Dendritic cell treated with granulocyte-macrophage colony-stimulating factor and Interleukin-4, amounts not matched to agents 40 ng/mL and 50 ng/mL, for 4 days (primary cell): ENCODE measurements at regions of chr3 and their contacts with region 1.

Region 1: GRCh38 chr3:118882353-118882947 is 152.2 kb downstream of the IGSF11 start:
- H3K4me3 Mint-ChIP-seq: no peak overlapping the region
- H3K27ac Mint-ChIP-seq: no peak overlapping the region
- H3K4me1 Mint-ChIP-seq: no peaks in the 10 kb centered on the region
- H3K27me3 Mint-ChIP-seq: peaks cover 5% of the 10 kb centered on the region

Region 2: DNA sequence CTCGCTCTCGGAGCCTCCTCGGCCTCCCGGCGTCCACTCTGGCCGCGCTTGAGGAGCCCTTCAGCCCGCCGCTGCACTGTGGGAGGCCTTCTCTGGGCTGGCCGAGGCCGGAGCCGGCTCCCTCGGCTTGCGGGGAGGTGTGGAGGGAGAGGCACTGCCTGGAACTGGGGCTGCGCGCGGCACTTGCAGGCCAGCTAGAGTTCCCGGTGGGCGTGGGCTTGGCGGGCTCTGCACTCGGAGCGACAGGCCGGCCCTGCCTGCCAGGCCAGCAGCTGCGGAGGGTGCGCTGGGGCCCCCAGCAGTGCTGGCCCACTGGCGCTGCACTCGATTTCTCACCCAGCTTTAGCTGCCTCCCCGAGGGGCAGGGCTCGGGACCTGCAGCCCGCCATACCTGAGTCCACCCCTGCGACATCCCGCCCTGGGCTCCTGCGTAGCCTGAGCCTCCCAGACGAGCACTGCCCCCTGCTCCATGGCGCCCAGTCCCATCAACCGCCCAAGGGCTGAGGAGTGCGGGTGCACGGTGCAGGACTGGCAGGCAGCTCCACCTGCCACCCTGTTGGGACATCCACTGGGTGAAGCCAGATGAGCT is 612.8 kb before region 1 on chr3:
- intact Hi-C with region 1: no loop called
- H3K4me3 Mint-ChIP-seq: no peak overlapping the region
- H3K27ac Mint-ChIP-seq: no peak overlapping the region
- H3K4me1 Mint-ChIP-seq: no peaks in the 10 kb centered on the region
- H3K27me3 Mint-ChIP-seq: no peaks in the 10 kb centered on the region

Region 3: DNA sequence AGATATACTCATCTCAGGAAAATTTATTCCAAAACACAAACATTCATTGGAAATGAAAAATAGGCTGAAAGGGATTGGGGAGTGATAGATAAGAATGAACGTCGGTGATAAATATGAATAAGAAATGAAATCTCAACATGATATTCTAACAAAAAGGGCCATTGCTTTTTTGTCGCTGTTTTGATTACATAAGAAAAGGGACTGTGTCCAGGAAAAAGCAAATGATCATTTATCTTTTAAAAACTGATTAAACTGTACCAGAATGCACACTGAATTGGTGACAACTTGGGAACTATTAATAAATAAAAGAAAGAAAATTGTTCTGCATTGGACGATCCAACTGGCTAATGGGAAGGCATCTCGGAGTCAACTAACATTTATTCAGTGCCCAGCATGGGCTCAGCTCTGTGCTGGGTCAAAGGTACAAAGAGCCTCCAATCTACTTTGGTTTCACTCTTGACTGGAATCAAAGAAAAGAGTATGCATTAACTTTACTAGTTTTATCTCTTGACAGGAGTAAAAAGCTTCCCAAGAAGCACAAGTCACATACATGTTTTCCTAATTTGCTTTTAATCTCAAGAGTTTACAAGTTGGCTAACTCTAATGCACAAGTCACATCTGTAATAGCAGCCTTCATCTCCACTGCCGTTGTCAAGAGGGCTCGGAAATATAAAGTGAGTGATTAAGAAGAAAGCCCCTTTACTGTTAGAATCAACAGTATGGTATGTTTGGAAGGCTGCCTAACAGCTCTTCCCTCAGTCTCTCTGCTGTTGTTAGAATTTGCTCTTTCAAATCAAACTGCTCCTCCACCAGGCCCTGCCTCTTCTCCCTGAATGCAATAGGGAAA is 127.8 kb before region 1 on chr3:
- intact Hi-C with region 1: no loop called
- H3K4me3 Mint-ChIP-seq: no peak overlapping the region
- H3K27ac Mint-ChIP-seq: no peak overlapping the region
- H3K4me1 Mint-ChIP-seq: no peaks in the 10 kb centered on the region
- H3K27me3 Mint-ChIP-seq: no peaks in the 10 kb centered on the region

Region 4: DNA sequence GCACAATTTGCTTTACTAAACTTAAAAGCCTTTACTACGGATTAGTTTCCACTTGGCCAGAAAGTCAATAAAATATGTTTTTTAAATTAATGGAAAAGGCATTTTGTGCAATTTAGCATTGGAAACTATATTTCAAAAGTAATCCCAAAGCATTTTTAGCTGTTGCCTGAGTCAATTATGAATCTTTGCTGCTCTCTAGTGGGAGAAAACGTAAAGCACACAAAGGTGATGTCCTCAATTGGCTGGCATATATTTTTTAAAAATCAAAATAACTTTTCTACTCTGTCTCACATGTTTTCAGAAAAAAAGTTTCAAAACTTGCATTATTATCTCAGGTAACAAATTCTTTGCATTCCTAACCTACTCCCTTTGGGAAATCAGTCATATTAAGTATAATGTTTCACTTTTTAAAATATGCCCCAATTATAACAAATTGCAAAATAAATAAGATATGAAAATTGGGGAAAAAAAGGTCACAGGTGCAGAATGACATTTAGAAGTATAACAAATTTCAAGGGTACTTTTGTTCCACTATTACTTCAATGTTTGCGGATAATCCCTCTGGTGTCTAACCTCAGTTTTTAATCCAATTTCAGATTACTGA is 216.3 kb after region 1 on chr3:
- intact Hi-C with region 1: loop called (anchors 1 kb)
- H3K4me3 Mint-ChIP-seq: no peak overlapping the region
- H3K27ac Mint-ChIP-seq: no peak overlapping the region
- H3K4me1 Mint-ChIP-seq: no peaks in the 10 kb centered on the region
- H3K27me3 Mint-ChIP-seq: no peaks in the 10 kb centered on the region